ENCODE measurements at regions of chr4 and their contacts with region 1.

Region 1: DNA sequence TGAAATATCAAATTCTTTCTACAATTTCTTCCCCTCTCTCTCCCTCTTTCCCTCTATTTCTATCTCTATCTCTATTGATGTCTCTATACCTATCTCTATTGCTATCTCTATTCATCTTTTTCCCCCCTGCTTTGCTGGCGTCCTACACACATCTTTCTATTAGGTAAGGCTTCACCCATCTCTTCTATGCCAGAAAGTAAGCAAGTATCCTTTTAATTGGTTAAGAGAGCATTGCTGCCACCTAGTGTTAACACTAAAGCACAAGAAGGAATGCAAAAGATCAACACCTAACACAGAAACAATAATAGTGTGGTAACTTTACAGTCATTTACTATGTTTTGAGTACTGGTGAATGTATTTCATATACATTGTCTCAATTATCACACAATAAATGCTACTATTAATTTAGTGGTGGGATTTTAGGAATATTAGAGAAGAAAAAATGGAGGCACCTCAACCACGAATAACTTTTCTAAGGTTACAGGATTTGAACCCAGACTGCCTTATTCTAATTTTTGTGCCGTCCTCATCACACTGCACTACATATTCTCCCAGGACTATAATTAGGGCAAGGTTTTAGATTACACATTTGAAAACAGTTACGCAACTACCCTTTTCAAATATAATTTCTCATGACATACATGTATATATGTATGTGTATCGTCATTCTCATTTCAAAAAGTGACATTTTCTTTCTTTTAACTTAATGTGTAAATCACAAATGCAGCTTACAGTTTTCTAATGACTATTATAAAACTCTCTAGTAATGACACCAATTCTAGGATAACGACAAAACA is 3.7 kb upstream of the C4orf36 start:
- DNase-seq: no peak
- H3K4me3 ChIP-seq: no peak overlapping the region
- H3K27ac ChIP-seq: no peak overlapping the region
- H3K4me1 ChIP-seq: peaks cover 12% of the 10 kb centered on the region
- H3K27me3 ChIP-seq: no peaks in the 10 kb centered on the region
- CTCF ChIP-seq: peak; percentile 63 to 77 (median 74)
- POLR2A ChIP-seq: no peak

Region 2: GRCh38 chr4:86497980-86498862 is 397.7 kb before region 1 on chr4:
- intact Hi-C with region 1: loop called (anchors 10 kb)
- DNase-seq: no peak
- H3K4me3 ChIP-seq: no peak overlapping the region
- H3K27ac ChIP-seq: peak overlapping the region; percentile 22
- H3K4me1 ChIP-seq: peaks cover 17% of the 10 kb centered on the region
- H3K27me3 ChIP-seq: no peaks in the 10 kb centered on the region
- CTCF ChIP-seq: peak; percentile 56 to 83 (median 56)
- POLR2A ChIP-seq: no peak

Region 3: DNA sequence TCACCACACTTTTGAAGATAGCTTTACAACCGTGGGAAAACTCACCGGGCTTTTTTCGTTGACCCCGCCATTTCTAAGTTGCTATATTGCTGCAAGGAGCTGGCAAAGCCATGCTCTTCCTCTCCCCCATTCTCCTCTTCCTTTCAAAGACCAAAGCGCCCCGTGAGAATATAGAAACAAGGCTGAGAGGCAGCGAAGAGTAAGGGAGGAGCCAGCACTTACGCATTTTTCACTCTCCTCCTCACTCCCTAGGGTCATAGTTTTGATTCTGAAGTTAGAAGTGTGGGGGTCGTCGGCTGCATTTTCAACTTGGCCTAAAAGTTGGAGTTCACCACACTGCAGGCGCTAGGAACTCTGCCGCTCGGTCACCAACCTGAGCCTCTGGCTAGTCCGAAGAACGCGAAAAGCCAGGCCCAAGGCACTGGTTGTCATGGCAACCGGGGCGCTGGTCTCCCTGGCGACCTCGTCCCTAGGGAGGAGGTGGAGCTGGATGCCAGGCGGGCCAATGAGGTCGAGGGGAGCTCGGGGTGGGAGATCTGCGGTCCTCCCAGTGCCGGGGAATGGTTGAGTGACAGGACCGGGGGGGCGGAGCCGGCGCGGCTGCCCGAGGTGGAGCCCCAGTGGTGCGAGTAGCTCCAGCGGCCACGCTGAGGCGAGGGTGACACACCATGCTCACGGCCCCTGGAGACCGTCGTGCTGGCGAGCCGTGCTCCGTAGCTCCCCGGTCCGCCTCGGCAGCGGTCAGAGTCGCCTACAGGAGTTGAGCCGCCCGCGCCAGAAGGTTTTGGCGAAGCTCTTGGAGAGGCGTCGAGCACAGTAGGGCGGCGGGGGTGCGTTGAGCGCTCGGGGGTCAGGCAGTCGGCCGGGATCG is 302.0 kb before region 1 on chr4 and contains the start of gene PTPN13:
- intact Hi-C with region 1: loop called (anchors 10 kb)
- DNase-seq: peak; percentile 97 to 98
- H3K4me3 ChIP-seq: peak within 1 kb of the TSS; percentile 65 to 92
- H3K27ac ChIP-seq: peak within 1 kb of the TSS; percentile 98
- H3K4me1 ChIP-seq: peaks cover 38% of the 10 kb centered on the region
- H3K27me3 ChIP-seq: no peaks in the 10 kb centered on the region
- CTCF ChIP-seq: no peak
- POLR2A ChIP-seq: peak in 1 of 2 donors; percentile 88
- total RNA-seq, gene PTPN13: 66.3 TPM

Region 4: DNA sequence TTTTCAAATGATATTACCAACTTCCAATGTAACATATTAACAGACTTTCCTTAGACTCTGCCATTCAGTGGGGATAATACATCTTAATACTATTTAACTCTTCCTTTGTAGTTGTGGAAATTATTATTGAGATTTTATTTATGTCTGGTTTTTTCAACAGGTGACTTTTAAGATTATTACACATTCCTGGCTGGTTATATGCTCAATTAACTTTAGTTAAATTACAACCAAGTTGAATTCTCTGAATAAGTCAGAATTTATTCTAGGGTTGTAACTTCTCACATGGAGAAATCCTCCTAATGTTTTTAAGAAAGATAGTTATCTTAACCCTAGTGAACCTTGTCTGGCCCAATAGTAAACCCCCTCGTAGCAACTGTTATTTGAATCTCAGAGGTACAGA is 154.0 kb before region 1 on chr4:
- intact Hi-C with region 1: no loop called
- DNase-seq: no peak
- H3K4me3 ChIP-seq: no peak overlapping the region
- H3K27ac ChIP-seq: no peak overlapping the region
- H3K4me1 ChIP-seq: no peaks in the 10 kb centered on the region
- H3K27me3 ChIP-seq: no peaks in the 10 kb centered on the region
- CTCF ChIP-seq: no peak
- POLR2A ChIP-seq: no peak

Measured in vagina (tissue), 2 donors.